Left colon (tissue), 2 donors: ENCODE measurements at regions of chr4 and their contacts with region 1.

Region 1: DNA sequence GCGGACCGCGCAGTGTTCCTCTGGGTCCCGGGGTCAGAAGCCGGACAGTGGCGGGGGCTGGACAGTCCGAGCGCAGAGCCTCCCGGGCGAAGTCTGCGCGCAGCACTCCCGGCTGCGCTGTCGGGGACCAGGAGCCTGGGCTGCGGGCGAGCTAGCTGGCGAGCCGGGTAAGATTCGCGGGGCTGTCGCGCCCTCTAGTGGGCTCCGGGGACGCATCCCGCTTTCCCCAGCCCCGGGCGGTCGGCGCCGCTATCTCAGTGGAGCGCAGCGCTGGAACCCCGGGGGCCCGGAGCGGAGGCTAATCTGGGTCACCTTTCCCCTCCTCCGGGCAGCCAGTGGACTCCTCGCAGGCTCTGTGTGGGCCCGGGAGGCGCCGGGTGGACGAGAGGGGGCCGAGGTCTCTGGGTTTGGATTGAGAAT is 4.2 kb downstream of the PDGFRA start:
- DNase-seq: peak; percentile 65 to 87
- ATAC-seq: peak; percentile 96

Region 2: GRCh38 chr4:52996261-52996892 is 1236.9 kb before region 1 on chr4:
- intact Hi-C with region 1: loop called in 1 of 2 experiments (anchors 10 kb)
- DNase-seq: no peak
- ATAC-seq: no peak

Region 3: DNA sequence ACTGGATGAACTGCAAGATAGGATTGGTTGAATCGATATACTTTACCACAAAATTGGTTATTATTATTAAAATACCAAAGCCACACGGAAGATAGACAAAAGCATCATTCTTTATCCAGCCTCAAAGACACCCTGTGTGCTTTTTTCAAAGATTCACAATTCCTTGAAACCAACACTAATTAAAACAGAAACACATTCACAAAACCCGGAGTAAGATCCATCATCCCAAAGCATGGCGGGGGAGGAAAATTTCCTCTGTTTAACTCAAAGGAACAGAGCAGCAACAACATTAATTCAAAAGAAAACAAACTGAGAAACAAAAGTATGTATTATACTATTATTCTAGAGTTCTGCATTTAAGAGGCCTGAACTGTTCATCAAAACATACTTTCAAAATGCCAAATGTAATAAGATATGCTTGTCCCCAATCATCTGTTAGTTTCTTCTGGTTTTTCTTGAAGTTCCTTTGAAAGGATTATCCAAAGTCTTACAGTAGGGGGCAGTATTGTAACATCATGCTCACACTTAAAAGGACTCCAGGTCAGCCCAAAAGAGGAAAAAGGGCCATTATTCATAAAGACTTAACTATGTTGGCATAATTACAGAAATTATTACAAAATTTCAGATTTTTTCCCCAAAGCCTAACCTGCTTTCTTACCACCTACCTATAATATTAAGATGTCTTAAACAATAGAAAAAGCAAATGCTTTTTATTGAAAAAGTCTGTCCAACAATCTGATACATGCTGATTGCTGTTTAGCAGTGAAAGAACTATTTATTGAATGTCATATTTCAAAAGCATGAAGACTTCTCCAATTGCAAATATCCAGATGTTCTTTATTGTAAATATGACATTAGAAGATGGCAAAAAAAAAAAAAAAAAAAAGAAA is 1036.2 kb before region 1 on chr4:
- intact Hi-C with region 1: loop called (anchors 5 to 10 kb)
- DNase-seq: no peak
- ATAC-seq: peak; percentile 67